Activated B cell treated with CpG ODN at 0.5 μM for 24 hours (primary cell): ENCODE measurements at regions of chr10 and their contacts with region 1.

Region 1: GRCh38 chr10:113678690-113679462 is 836 bp upstream of the CASP7 start:
- DNase-seq: peak; percentile 68
- ATAC-seq: peak; percentile 9
- H3K4me3 Mint-ChIP-seq: peak overlapping the region; percentile 92
- H3K27ac Mint-ChIP-seq: peak overlapping the region; percentile 94
- H3K4me1 Mint-ChIP-seq: peaks cover 48% of the 10 kb centered on the region
- H3K27me3 Mint-ChIP-seq: no peaks in the 10 kb centered on the region
- CTCF ChIP-seq: no peak

Region 2: DNA sequence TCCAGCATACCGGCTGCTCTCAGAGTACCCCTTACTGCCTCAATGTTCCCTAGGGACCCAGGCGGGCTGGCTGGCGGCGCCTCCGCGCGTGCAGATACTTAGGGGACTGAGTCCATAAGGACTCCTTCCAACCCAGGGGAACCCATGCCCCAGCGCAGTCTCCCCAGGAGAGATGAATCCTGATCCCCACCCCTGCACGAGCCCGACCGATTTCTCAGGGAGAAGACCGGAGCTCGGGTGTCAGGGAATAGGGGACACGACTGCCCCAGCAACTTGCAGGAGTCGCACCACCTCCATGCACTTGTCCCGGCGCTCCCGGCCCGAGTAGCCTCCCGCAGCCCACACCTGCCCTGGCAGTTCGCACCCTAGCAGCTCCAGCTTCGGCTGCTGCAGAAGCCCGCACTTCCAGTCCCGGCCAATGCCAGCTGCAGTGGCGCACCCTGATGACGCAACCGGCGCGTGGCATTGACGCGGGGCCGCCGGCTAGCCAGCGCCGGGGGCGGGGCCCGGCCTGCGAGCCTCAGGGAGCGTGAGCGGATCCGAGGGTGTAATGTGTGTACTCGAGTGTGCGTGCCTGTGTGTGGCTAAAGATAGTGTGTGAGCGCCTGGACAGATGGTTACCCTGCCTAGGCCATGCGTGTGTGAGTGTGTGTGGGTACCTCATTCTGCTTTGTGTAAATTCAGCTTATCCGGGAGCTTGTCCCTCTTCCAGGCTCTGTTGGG is 1495.4 kb before region 1 on chr10 and contains the start of gene GPAM:
- CTCF ChIA-PET with region 1: no interaction called
- POLR2A ChIA-PET with region 1: no interaction called
- intact Hi-C with region 1: loop called (anchors 5 kb)
- DNase-seq: peak; percentile 100
- ATAC-seq: peak; percentile 95
- H3K4me3 Mint-ChIP-seq: peak within 1 kb of the TSS; percentile 91
- H3K27ac Mint-ChIP-seq: peak within 1 kb of the TSS; percentile 93
- H3K4me1 Mint-ChIP-seq: peaks cover 21% of the 10 kb centered on the region
- H3K27me3 Mint-ChIP-seq: no peaks in the 10 kb centered on the region
- CTCF ChIP-seq: no peak
- total RNA-seq, gene GPAM: 8.6 and 10.2 TPM in 2 replicates

Region 3: GRCh38 chr10:113179265-113179664 is 499.6 kb before region 1 on chr10:
- CTCF ChIA-PET with region 1: no interaction called
- POLR2A ChIA-PET with region 1: no interaction called
- intact Hi-C with region 1: no loop called
- DNase-seq: no peak
- ATAC-seq: no peak
- H3K4me3 Mint-ChIP-seq: no peak overlapping the region
- H3K27ac Mint-ChIP-seq: no peak overlapping the region
- H3K4me1 Mint-ChIP-seq: peaks cover 5% of the 10 kb centered on the region
- H3K27me3 Mint-ChIP-seq: no peaks in the 10 kb centered on the region
- CTCF ChIP-seq: no peak

Region 4: DNA sequence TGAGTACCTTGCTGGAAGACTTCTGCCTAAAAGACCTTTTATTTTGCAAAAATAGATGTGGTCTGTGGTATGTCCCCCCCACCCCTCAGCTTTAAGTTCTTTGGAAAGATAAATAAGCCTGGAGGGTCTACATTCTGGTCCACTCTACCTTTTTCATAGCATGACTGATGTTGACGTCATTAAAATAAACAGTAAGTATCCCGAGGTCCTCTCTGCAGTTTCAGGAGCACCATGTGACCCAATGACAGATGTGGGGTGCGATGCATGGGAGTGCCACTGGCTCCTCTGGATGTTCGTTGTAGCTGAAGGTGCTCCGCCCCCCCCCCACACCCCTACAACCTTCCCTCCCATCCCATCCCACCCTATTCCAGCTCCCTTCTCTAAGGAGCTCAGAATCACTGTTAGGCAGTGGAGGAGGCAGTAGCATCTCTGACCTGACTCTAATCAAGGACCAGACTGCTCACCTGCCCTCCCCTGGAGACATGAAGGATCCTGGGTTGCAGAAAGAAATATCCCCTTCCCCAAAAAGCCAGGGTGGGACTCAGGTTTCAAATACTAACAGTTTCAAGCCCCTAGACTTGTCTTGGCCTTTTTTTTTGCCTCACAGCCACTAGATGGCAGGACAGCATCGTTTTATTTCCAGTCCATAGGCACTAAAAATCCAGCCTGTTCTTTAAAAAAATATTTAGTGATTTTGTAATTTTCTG is 25.9 kb after region 1 on chr10:
- CTCF ChIA-PET with region 1: interaction called, 6 read pairs
- POLR2A ChIA-PET with region 1: no interaction called
- intact Hi-C with region 1: loop called (anchors 1 kb)
- DNase-seq: no peak
- ATAC-seq: no peak
- H3K4me3 Mint-ChIP-seq: no peak overlapping the region
- H3K27ac Mint-ChIP-seq: no peak overlapping the region
- H3K4me1 Mint-ChIP-seq: peaks cover 13% of the 10 kb centered on the region
- H3K27me3 Mint-ChIP-seq: no peaks in the 10 kb centered on the region
- CTCF ChIP-seq: no peak

Region 5: DNA sequence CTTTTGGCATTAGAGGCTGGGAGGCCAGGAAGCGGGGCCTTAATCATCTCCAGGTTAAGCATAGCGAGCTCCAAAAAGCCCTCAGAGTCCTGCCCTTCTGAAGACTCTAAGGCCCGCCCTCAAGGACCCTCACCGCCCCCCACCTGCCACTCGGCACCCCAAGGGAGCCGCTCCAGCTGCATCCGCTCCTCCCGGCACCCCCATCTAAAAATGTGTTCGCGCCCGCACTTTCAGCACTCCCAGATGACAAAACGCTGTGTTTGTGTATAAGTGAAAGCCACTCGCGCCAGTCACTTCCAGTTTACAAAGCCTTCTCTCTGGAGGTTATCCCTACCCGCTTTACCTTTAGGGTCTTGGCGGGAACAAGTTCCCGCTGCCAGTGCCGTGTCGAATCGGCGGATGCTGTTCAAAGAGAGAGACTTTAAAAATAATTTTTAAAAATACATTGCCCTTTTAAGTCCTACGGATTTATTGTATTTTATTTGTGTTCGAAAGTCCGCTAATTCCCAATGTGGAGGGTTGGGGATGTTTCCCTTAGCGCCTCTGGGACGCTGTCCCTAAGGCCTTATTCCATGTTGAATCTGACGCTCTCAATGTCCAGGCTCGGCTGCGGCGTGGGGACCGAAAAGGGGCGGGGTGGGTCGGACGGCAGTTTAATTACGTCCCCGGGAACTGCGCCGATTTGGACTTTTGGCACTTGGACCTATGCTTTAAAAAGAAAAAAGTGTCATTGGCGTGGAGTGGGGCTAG is 175.3 kb after region 1 on chr10 and contains the starts of genes DCLRE1A and NHLRC2:
- CTCF ChIA-PET with region 1: no interaction called
- POLR2A ChIA-PET with region 1: interaction called, 4 read pairs
- intact Hi-C with region 1: loop called (anchors 1 kb)
- DNase-seq: peak; percentile 62
- ATAC-seq: peak; percentile 68
- H3K4me3 Mint-ChIP-seq: peak within 1 kb of the TSS; percentile 98
- H3K27ac Mint-ChIP-seq: peak within 1 kb of the TSS; percentile 99
- H3K4me1 Mint-ChIP-seq: peaks cover 51% of the 10 kb centered on the region
- H3K27me3 Mint-ChIP-seq: no peaks in the 10 kb centered on the region
- CTCF ChIP-seq: no peak
- total RNA-seq, gene DCLRE1A: 4.5 and 4.9 TPM in 2 replicates
- total RNA-seq, gene NHLRC2: 40.3 and 43.9 TPM in 2 replicates

Region 6: GRCh38 chr10:114173921-114174694 is 495.2 kb after region 1 on chr10 and contains the start of gene CCDC186:
- CTCF ChIA-PET with region 1: interaction called, 3 read pairs
- POLR2A ChIA-PET with region 1: interaction called, 5 read pairs
- intact Hi-C with region 1: loop called (anchors 1 kb)
- DNase-seq: peak; percentile 96
- ATAC-seq: peak; percentile 98
- H3K4me3 Mint-ChIP-seq: peak within 1 kb of the TSS; percentile 97
- H3K27ac Mint-ChIP-seq: peak within 1 kb of the TSS; percentile 95
- H3K4me1 Mint-ChIP-seq: peaks cover 29% of the 10 kb centered on the region
- H3K27me3 Mint-ChIP-seq: peaks cover 1% of the 10 kb centered on the region
- CTCF ChIP-seq: no peak
- total RNA-seq, gene CCDC186: 19.7 and 24.8 TPM in 2 replicates

Region 7: GRCh38 chr10:114821293-114821914 is 1142.5 kb after region 1 on chr10 and contains the start of gene FHIP2A:
- CTCF ChIA-PET with region 1: no interaction called
- POLR2A ChIA-PET with region 1: interaction called, 5 read pairs
- intact Hi-C with region 1: loop called (anchors 2 kb)
- DNase-seq: peak; percentile 95
- ATAC-seq: peak; percentile 93
- H3K4me3 Mint-ChIP-seq: peak within 1 kb of the TSS; percentile 91
- H3K27ac Mint-ChIP-seq: peak within 1 kb of the TSS; percentile 90
- H3K4me1 Mint-ChIP-seq: peaks cover 27% of the 10 kb centered on the region
- H3K27me3 Mint-ChIP-seq: no peaks in the 10 kb centered on the region
- CTCF ChIP-seq: no peak
- total RNA-seq, gene FHIP2A: 16.5 and 20.2 TPM in 2 replicates